ENCODE measurements at regions of chr17 and their contacts with region 1.

Region 1: GRCh38 chr17:77948690-77949114 is 9.8 kb upstream of the TNRC6C start:
- DNase-seq: peak in 7 of 10 donors; percentile 51 to 85 (median 75)
- H3K4me3 ChIP-seq: peak overlapping the region in 5 of 59 donors; percentile 9 to 28 (median 15)
- H3K27ac ChIP-seq: peak overlapping the region in 43 of 59 donors; percentile 3 to 82 (median 59)
- H3K27me3 ChIP-seq: no peaks in the 10 kb centered on the region
- CTCF ChIP-seq: peak in 3 of 56 donors; percentile 8 to 24 (median 13)

Region 2: GRCh38 chr17:77734341-77735080 is 214.2 kb before region 1 on chr17:
- intact Hi-C with region 1: loop called (anchors 10 kb)
- DNase-seq: peak; percentile 66 to 93 (median 88)
- H3K4me3 ChIP-seq: peak overlapping the region in 46 of 59 donors; percentile 3 to 55 (median 30)
- H3K27ac ChIP-seq: peak overlapping the region; percentile 55 to 97 (median 86)
- H3K27me3 ChIP-seq: peaks cover 0 to 14% (median 0%) of the 10 kb centered on the region in 45 donors
- CTCF ChIP-seq: peak in 47 of 56 donors; percentile 8 to 69 (median 41)

Region 3: GRCh38 chr17:77834170-77835115 is 114.3 kb before region 1 on chr17:
- intact Hi-C with region 1: loop called in 1 of 2 experiments (anchors 5 kb)
- DNase-seq: peak in 8 of 10 donors; percentile 47 to 85 (median 66)
- H3K4me3 ChIP-seq: no peak overlapping the region
- H3K27ac ChIP-seq: peak overlapping the region in 9 of 59 donors; percentile 7 to 59 (median 38)
- H3K27me3 ChIP-seq: no peaks in the 10 kb centered on the region
- CTCF ChIP-seq: no peak

Region 4: DNA sequence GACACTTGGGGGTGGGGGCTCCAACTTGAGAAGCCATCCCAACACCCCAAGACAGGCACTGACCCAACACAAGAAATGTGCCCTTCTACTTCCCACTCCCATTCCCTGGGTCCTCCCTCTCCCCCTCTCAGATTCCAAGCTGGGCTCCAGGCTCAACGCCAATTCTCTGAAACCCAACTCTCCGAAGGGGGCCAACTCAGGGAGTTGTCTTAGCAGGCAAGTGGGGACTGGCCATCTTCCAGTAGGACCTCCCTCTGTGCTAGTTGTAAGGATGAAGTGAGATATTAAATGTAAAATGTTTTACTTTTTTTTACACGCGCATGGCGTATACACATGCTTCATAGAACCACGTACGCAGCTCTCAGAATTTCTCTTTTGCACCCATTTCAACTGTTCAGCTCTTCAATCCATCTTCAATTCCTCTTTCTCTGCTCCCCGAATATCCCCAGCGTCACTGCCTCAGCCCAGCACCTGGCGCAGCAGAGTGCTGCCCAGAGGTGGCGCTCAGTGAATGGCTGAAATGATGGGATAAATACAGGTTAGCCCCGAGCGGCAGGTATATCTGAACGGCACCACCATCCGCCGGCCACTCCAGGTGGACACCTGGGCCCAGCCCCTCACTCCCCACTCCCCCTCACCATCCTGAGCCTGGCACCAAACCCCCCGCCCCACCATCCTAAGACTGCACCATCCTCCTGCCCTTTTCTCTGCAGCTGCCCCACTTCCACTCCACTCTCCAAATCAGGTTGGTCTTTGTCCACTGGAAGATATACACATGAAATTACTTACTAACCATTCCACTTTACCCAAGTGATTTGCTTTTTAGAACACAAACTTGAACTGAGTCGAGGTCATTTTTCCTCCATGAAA is 34.1 kb before region 1 on chr17:
- intact Hi-C with region 1: no loop called
- DNase-seq: peak in 2 of 10 donors; percentile 25 to 40
- H3K4me3 ChIP-seq: no peak overlapping the region
- H3K27ac ChIP-seq: no peak overlapping the region
- H3K27me3 ChIP-seq: peaks cover 0 to 4% (median 0%) of the 10 kb centered on the region in 45 donors
- CTCF ChIP-seq: no peak

Measured in dorsolateral prefrontal cortex (tissue), 120 donors.